PC-9 (cell line): ENCODE measurements at regions of chr2 and their contacts with region 1.

Region 1: DNA sequence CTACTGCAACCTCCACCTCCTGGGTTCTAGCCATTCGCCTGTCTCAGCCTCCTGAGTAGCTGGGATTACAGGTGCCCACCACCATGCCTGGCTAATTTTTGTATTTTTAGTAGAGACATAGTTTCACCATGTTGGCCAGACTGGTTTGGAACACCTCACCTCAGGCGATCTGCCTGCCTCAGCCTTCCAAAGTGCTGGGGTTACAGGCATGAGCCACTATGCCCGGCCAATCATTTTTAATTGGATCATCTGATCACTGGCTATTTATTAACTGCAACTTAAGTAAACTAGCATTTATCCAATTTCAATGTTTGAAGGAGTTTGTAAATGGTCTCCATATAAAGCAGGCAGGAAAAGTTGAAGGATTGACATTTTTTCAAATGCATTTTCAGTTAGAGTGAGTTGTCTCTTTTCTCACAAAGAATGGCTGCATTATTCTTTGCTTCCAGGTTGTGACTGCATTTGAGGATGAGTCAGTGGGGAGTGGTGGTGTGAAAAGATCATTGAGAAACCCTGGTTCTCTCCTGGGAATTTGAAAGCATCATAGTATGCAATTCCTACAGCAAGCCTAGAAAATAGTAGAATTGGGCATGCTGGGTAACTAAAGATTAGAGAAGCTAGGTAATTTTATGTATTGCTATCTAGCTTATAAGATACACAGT is 431.1 kb upstream of the ZEB2 start:
- DNase-seq: peak; percentile 19 to 47
- H3K4me3 ChIP-seq: no peak overlapping the region
- H3K27ac ChIP-seq: peak overlapping the region; percentile 54
- H3K4me1 ChIP-seq: 0 out of 2 replicates have a peak, but pooled peaks cover 7% of the 10 kb centered on the region
- H3K27me3 ChIP-seq: no peaks in the 10 kb centered on the region
- CTCF ChIP-seq: no peak

Region 2: GRCh38 chr2:144965172-144965571 is 14.1 kb after region 1 on chr2:
- CTCF ChIA-PET with region 1: no interaction called
- POLR2A ChIA-PET with region 1: no interaction called
- intact Hi-C with region 1: no loop called
- DNase-seq: no peak
- H3K4me3 ChIP-seq: no peak overlapping the region
- H3K27ac ChIP-seq: no peak overlapping the region
- H3K4me1 ChIP-seq: no peaks in the 10 kb centered on the region
- H3K27me3 ChIP-seq: no peaks in the 10 kb centered on the region
- CTCF ChIP-seq: no peak

Region 3: DNA sequence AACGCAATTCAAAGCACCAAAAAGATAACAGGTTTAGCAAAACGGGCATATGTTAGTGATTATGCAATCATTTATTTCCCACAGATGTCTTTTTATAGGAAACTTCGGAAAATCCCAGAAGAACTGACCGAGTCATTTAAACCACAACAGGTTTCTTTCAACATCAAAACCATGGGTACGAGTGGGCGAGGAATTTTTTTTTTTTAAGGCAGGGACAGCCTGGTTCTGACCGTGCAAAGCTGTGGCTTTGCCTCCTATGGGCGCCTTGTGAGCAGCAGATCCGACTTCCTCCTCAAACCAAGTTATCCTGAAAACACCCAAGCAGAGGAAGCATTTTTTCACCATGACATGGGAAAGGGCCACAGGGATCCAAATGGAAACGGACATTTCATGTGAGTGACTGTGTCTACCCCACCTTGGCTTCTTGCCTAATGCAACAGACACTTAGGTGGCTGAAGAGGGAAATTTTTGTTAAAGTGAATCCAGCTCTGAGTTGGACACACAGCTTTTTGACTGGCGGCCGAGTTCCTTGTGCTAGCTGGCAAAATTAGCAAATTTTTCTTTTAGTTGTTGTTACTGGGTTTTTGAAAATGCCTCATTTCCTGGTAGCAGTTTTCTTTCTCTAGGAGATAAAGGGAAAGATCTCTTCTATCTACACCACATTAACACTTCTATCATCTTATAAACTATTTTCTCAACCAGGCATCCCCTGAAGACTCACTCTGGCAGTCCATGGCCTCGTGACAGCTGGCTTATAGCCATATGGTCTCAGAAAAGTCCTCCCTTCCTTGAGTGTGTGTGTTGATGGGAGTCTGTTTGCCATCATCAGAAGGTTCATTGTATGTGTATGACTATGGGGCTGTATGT is 56.3 kb after region 1 on chr2:
- CTCF ChIA-PET with region 1: no interaction called
- POLR2A ChIA-PET with region 1: no interaction called
- intact Hi-C with region 1: loop called (anchors 5 kb)
- DNase-seq: peak in 1 of 2 experiments; percentile 62
- H3K4me3 ChIP-seq: no peak overlapping the region
- H3K27ac ChIP-seq: peak overlapping the region; percentile 39
- H3K4me1 ChIP-seq: no peaks in the 10 kb centered on the region
- H3K27me3 ChIP-seq: no peaks in the 10 kb centered on the region
- CTCF ChIP-seq: no peak

Region 4: DNA sequence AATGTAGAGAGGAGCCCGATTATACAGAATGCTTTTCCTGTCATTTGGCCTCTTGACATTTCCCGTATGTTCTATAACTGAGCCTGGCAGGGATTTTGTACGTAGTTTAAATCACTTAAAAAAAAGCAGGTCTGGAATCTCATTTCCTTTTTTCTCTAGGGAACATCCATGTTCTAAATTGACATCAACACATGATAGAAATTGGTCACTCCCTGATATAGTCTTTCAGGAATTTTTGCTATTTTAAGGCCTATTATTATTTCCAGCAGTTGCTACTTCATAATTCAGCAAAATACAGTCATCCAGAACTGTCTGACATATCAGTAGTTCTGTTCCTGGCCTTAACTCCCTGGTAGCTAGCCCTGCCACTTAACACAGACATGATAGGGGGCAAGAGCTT is 134.6 kb after region 1 on chr2:
- CTCF ChIA-PET with region 1: no interaction called
- POLR2A ChIA-PET with region 1: no interaction called
- intact Hi-C with region 1: no loop called
- DNase-seq: no peak
- H3K4me3 ChIP-seq: no peak overlapping the region
- H3K27ac ChIP-seq: no peak overlapping the region
- H3K4me1 ChIP-seq: no peaks in the 10 kb centered on the region
- H3K27me3 ChIP-seq: no peaks in the 10 kb centered on the region
- CTCF ChIP-seq: no peak